ENCODE measurements at regions of chr16 and their contacts with region 1.

Region 1: GRCh38 chr16:25235991-25236390 is 19.2 kb downstream of the AQP8 start:
- H3K4me3 ChIP-seq: no peak overlapping the region
- H3K27ac ChIP-seq: no peak overlapping the region
- H3K4me1 ChIP-seq: no peaks in the 10 kb centered on the region
- CTCF ChIP-seq: no peak

Region 2: DNA sequence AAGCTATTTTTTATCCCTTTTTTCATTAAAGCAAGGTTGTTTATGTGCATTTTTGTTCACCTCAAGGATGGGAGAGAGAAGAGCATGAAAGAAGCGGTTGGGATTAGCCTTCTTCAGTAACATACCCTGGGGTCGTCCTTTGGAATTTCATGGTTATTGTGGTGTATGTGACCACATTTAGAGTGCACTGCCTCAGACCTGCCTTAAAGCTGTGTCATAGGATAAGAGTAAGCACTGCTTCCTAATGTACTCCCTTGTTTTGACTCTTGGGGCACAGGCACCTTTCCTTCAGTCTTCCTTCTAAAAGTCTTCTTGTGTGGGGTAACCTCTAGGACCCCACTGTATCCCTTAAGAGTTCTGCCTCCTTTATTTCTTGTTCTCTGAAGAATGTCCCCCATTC is 477.6 kb before region 1 on chr16:
- CTCF ChIA-PET with region 1: interaction called, 14 read pairs
- POLR2A ChIA-PET with region 1: no interaction called
- H3K4me3 ChIP-seq: no peak overlapping the region
- H3K27ac ChIP-seq: no peak overlapping the region
- H3K4me1 ChIP-seq: no peaks in the 10 kb centered on the region
- CTCF ChIP-seq: no peak

Region 3: DNA sequence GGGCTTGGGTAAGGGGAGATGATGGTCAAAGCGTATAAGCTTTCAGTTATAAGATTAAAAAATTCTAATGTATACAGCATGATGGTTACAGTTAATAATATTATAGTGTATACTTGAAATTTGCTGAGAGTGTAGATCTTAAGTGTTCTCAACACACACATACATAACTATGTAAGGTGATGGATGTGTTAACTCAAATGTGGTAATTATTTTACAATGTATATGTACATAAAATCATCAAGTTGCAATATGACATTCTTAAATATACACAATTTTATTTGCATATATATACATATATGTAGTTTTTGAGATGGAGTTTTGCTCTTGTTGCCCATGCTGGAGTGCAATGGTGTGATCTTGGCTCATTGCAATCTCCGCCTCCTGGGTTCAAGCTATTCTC is 14.5 kb after region 1 on chr16:
- CTCF ChIA-PET with region 1: interaction called, 12 read pairs
- POLR2A ChIA-PET with region 1: no interaction called
- H3K4me3 ChIP-seq: no peak overlapping the region
- H3K27ac ChIP-seq: no peak overlapping the region
- H3K4me1 ChIP-seq: no peaks in the 10 kb centered on the region
- CTCF ChIP-seq: no peak

Region 4: GRCh38 chr16:25317732-25318316 is 81.8 kb after region 1 on chr16:
- CTCF ChIA-PET with region 1: no interaction called
- POLR2A ChIA-PET with region 1: no interaction called
- H3K4me3 ChIP-seq: no peak overlapping the region
- H3K27ac ChIP-seq: no peak overlapping the region
- H3K4me1 ChIP-seq: no peaks in the 10 kb centered on the region
- CTCF ChIP-seq: no peak